IMR-90 (cell line): ENCODE measurements at regions of chr11 and their contacts with region 1.

Region 1: GRCh38 chr11:63838678-63839507 is at the start of gene MARK2:
- DNase-seq: peak; percentile 96
- ATAC-seq: peak; percentile 91
- H3K4me3 ChIP-seq: peak within 1 kb of the TSS; percentile 81
- H3K27ac ChIP-seq: peak within 1 kb of the TSS; percentile 57
- H3K4me1 ChIP-seq: peaks cover 11% of the 10 kb centered on the region
- H3K27me3 ChIP-seq: no peaks in the 10 kb centered on the region
- CTCF ChIP-seq: no peak
- POLR2A ChIP-seq: peak; percentile 66
- RAD21 ChIP-seq: no peak
- total RNA-seq, gene MARK2: 6.6 and 7.2 TPM in 2 replicates

Region 2: GRCh38 chr11:63352144-63352543 is 486.7 kb before region 1 on chr11:
- CTCF ChIA-PET with region 1: no interaction called
- POLR2A ChIA-PET with region 1: no interaction called
- dilution Hi-C with region 1: no loop called
- in situ Hi-C with region 1: no loop called
- intact Hi-C with region 1: no loop called
- DNase-seq: no peak
- ATAC-seq: no peak
- H3K4me3 ChIP-seq: no peak overlapping the region
- H3K27ac ChIP-seq: no peak overlapping the region
- H3K4me1 ChIP-seq: no peaks in the 10 kb centered on the region
- H3K27me3 ChIP-seq: no peaks in the 10 kb centered on the region
- CTCF ChIP-seq: no peak
- POLR2A ChIP-seq: no peak
- RAD21 ChIP-seq: no peak

Region 3: GRCh38 chr11:63621931-63622782 is 216.7 kb before region 1 on chr11:
- CTCF ChIA-PET with region 1: no interaction called
- POLR2A ChIA-PET with region 1: no interaction called
- dilution Hi-C with region 1: no loop called
- in situ Hi-C with region 1: no loop called
- intact Hi-C with region 1: no loop called
- DNase-seq: no peak
- ATAC-seq: no peak
- H3K4me3 ChIP-seq: no peak overlapping the region
- H3K27ac ChIP-seq: no peak overlapping the region
- H3K4me1 ChIP-seq: no peaks in the 10 kb centered on the region
- H3K27me3 ChIP-seq: no peaks in the 10 kb centered on the region
- CTCF ChIP-seq: no peak
- POLR2A ChIP-seq: no peak
- RAD21 ChIP-seq: no peak

Region 4: DNA sequence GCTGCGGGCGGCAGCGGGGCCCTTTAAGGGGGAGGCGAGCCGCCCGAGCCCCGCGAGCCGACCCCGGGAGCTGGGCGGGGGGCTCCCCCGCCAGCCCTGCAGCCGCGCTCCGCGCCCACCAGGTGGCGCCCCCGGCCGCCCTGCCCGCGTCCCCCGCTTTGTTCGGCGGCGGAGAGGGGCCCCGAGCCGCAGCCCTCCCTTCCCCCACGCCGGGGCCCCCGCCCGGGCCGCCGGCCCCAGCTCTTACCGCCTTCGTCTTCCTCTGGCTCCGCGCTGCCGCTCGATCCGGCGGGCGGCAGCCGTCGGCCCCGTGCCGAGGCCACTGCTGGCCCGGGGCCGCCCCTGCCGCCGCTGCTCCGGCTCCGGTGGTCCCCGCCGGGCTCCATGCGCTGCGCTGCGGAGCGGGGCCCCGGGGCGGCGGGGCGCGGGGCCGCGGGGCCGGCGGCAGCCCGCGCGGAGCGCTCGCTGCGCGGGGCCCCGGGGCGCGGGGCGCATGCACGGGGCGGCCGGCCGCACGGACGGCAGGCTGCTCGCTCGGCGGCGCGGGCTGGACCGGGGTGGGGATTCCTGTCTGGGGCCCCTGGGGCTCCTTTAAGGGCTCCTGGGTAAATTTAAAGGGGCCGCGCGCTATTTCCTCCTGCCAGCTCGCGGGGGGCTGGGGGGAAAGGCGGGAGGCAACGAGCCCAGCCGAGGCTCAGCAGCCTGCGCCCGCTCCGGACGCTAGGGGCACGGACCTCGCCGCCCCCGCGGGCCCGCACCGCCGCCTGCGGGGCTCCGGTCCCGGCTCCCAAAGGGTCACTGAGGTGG is 70.5 kb before region 1 on chr11 and contains the start of gene ZFTA:
- CTCF ChIA-PET with region 1: interaction called, 4 read pairs
- POLR2A ChIA-PET with region 1: no interaction called
- dilution Hi-C with region 1: no loop called
- in situ Hi-C with region 1: no loop called
- intact Hi-C with region 1: loop called (anchors 2 kb)
- DNase-seq: peak; percentile 37
- ATAC-seq: peak; percentile 53
- H3K4me3 ChIP-seq: peak within 1 kb of the TSS; percentile 59
- H3K27ac ChIP-seq: peak within 1 kb of the TSS; percentile 58
- H3K4me1 ChIP-seq: peaks cover 15% of the 10 kb centered on the region
- H3K27me3 ChIP-seq: no peaks in the 10 kb centered on the region
- CTCF ChIP-seq: peak; percentile 84
- POLR2A ChIP-seq: no peak
- RAD21 ChIP-seq: peak; percentile 72
- total RNA-seq, gene ZFTA: 5.4 and 7.2 TPM in 2 replicates

Region 5: GRCh38 chr11:63871962-63872799 is 33.3 kb after region 1 on chr11:
- CTCF ChIA-PET with region 1: interaction called, 3 read pairs
- POLR2A ChIA-PET with region 1: interaction called, 3 read pairs
- dilution Hi-C with region 1: no loop called
- in situ Hi-C with region 1: no loop called
- intact Hi-C with region 1: loop called (anchors 1 kb)
- DNase-seq: peak; percentile 93
- ATAC-seq: peak; percentile 96
- H3K4me3 ChIP-seq: no peak overlapping the region
- H3K27ac ChIP-seq: no peak overlapping the region
- H3K4me1 ChIP-seq: peaks cover 14% of the 10 kb centered on the region; the same call in 1 of the 2 replicates
- H3K27me3 ChIP-seq: no peaks in the 10 kb centered on the region
- CTCF ChIP-seq: peak; percentile 57
- POLR2A ChIP-seq: no peak
- RAD21 ChIP-seq: peak; percentile 62

Region 6: DNA sequence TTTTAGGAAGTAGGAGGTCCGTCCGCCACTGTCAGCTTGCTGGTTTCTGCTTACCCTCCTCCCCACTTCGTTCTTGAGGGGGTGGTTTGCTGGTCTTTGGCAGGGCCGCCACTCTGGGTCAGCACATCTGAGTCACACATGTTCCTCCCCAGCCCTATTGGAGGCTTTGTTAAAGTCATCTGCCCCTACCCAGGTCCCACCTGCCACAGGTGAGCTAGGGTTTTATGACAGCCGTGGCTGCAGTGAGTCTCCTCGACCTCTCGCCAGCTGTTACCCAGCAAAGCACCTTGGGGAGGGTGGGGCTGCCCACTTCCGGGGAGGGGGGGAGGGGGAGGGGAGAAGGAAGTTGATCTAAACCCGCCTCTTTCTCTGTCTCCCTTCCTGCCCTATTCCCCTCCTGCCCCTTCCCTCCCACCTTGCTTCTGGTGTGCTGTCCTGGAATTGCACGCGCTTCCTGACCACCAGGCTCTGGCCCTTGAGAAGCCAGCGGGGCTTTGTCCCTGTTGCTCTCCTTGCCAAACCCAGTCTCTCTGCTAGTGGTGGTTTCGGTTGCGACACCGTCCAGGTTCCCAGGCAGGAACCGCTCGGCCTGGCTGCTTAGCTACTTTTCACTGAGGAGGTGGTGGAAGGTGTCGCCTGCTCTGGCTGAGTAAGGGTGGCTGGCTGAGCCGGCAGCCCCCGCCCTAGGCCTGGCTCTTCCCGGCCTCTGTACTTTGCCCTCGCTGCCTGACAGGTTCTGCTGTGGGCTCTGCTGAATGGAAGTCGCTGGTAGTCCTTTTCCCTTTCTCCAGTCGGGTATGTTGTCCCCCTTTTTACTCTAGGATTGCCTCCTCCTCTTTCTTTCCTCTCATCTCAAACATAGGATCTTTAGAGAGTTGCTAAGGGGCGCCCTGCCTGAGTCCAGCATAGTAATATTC is 49.5 kb after region 1 on chr11:
- CTCF ChIA-PET with region 1: no interaction called
- POLR2A ChIA-PET with region 1: interaction called, 10 read pairs
- dilution Hi-C with region 1: no loop called
- in situ Hi-C with region 1: no loop called
- intact Hi-C with region 1: no loop called
- DNase-seq: peak; percentile 52
- ATAC-seq: peak; percentile 48
- H3K4me3 ChIP-seq: no peak overlapping the region
- H3K27ac ChIP-seq: no peak overlapping the region
- H3K4me1 ChIP-seq: peaks cover 8% of the 10 kb centered on the region
- H3K27me3 ChIP-seq: no peaks in the 10 kb centered on the region
- CTCF ChIP-seq: no peak
- POLR2A ChIP-seq: no peak
- RAD21 ChIP-seq: no peak

Region 7: DNA sequence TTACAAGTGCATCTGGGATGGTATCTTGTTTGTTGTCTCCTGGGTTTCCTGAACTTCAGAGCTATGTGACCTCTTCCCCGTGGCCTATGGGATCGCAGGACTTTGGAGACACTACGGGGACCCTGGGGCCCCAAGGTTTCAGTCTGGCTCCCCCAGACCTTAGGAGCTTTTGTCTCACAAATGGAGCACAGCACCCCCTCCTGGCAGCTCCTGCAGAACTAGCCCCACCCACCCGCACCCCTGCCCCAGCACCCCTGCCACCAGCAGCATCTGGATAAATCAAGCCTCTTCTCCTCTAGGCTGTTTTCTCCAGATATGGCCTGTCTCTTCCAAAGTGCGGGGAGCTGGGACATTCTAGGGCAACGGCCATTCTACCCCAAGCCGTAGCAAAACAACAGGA is 67.7 kb after region 1 on chr11:
- CTCF ChIA-PET with region 1: no interaction called
- POLR2A ChIA-PET with region 1: interaction called, 15 read pairs
- dilution Hi-C with region 1: no loop called
- in situ Hi-C with region 1: no loop called
- intact Hi-C with region 1: loop called (anchors 1 kb)
- DNase-seq: peak; percentile 13
- ATAC-seq: no peak
- H3K4me3 ChIP-seq: no peak overlapping the region
- H3K27ac ChIP-seq: no peak overlapping the region
- H3K4me1 ChIP-seq: no peaks in the 10 kb centered on the region
- H3K27me3 ChIP-seq: no peaks in the 10 kb centered on the region
- CTCF ChIP-seq: peak; percentile 12; the same call in 1 of the 2 replicates
- POLR2A ChIP-seq: no peak
- RAD21 ChIP-seq: no peak

Region 8: DNA sequence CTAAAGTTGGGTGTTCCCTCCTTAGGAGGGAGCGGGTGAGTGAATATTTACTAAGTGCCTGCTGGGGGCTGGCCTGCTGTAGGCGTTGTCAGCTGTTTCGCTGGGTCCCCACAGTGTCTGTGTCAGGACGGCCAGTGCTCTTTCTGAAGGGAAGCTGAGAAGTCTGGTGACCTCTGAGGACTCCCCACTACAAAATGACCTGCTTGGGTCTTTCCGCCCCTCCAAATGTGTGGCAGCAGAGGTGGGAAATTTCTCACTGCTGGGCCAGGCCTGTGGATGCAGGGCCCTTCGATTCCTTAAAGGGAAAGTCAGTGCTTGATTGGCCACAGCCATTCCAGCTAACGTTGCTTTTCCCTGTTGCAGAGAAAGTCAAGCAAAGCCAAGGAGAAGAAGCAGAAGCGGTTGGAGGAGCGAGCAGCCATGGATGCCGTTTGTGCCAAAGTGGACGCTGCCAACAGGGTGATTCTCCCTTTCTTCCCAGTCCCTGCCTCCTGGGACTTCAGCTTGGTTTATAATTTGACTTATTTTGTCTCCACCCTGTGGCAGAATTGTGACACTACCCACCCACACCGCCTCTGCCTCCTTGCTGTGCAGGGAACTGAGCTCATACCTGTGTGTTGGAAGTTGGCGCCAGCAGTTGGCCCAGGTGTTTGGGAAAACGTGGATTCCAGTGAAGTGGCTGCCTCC is 106.7 kb after region 1 on chr11:
- CTCF ChIA-PET with region 1: interaction called, 21 read pairs
- POLR2A ChIA-PET with region 1: no interaction called
- dilution Hi-C with region 1: no loop called
- in situ Hi-C with region 1: loop called (anchors 5 kb)
- intact Hi-C with region 1: loop called (anchors 1 kb)
- DNase-seq: peak; percentile 68
- ATAC-seq: peak; percentile 97
- H3K4me3 ChIP-seq: no peak overlapping the region
- H3K27ac ChIP-seq: no peak overlapping the region
- H3K4me1 ChIP-seq: peaks cover 6% of the 10 kb centered on the region; the same call in 1 of the 2 replicates
- H3K27me3 ChIP-seq: no peaks in the 10 kb centered on the region
- CTCF ChIP-seq: peak; percentile 77
- POLR2A ChIP-seq: no peak
- RAD21 ChIP-seq: peak; percentile 76

Region 9: GRCh38 chr11:64152841-64153691 is 314.2 kb after region 1 on chr11:
- CTCF ChIA-PET with region 1: no interaction called
- POLR2A ChIA-PET with region 1: no interaction called
- dilution Hi-C with region 1: no loop called
- in situ Hi-C with region 1: loop called (anchors 5 kb)
- intact Hi-C with region 1: loop called (anchors 1 kb)
- DNase-seq: peak; percentile 20
- ATAC-seq: peak; percentile 97
- H3K4me3 ChIP-seq: no peak overlapping the region
- H3K27ac ChIP-seq: no peak overlapping the region
- H3K4me1 ChIP-seq: no peaks in the 10 kb centered on the region; the same call in 1 of the 2 replicates
- H3K27me3 ChIP-seq: no peaks in the 10 kb centered on the region
- CTCF ChIP-seq: peak; percentile 94
- POLR2A ChIP-seq: no peak
- RAD21 ChIP-seq: peak; percentile 84

Region 10: DNA sequence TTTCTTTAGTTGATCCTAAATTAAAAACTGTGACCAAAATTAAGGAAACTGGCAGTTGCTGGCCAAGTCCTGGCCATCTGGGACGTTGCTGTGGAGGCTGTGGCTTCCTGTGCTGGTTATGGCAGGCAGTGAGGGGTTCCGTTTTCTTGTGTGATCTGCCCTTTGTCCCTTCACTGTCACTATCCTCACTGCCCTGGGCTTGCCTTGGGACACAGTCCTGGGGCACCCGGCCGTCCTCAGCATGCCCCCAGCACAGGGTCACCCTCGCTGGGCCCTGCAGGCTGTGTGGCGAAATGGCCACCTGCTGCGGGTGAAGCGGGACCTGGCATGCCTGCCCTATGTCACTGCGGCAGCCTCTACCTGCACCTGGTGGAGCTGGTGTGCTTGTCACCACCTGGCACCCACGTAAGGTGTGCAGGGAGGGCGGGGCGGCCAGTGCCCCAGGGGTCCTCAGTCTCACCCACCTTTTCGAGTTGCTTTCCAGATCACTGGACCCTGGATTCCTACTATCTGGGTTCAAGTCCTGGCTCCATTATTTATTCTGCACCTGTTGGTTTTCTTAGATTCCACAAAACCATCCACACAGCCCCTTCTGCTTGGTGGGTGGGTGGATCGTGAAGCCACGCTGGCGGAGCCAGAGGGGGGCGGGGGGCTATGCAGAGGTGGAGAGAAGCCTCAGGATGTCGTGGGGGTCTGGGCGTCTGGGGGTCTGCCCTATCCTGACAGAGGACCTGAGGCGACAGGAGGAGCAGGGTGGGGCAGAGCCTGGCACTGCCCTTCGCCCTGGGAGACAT is 699.8 kb after region 1 on chr11:
- CTCF ChIA-PET with region 1: no interaction called
- POLR2A ChIA-PET with region 1: no interaction called
- dilution Hi-C with region 1: no loop called
- in situ Hi-C with region 1: no loop called
- intact Hi-C with region 1: no loop called
- DNase-seq: no peak
- ATAC-seq: no peak
- H3K4me3 ChIP-seq: no peak overlapping the region
- H3K27ac ChIP-seq: no peak overlapping the region
- H3K4me1 ChIP-seq: peaks cover 2% of the 10 kb centered on the region; the same call in 1 of the 2 replicates
- H3K27me3 ChIP-seq: peaks cover 32% of the 10 kb centered on the region
- CTCF ChIP-seq: no peak
- POLR2A ChIP-seq: no peak
- RAD21 ChIP-seq: no peak